ENCODE measurements at regions of chr5 and their contacts with region 1.

Region 1: DNA sequence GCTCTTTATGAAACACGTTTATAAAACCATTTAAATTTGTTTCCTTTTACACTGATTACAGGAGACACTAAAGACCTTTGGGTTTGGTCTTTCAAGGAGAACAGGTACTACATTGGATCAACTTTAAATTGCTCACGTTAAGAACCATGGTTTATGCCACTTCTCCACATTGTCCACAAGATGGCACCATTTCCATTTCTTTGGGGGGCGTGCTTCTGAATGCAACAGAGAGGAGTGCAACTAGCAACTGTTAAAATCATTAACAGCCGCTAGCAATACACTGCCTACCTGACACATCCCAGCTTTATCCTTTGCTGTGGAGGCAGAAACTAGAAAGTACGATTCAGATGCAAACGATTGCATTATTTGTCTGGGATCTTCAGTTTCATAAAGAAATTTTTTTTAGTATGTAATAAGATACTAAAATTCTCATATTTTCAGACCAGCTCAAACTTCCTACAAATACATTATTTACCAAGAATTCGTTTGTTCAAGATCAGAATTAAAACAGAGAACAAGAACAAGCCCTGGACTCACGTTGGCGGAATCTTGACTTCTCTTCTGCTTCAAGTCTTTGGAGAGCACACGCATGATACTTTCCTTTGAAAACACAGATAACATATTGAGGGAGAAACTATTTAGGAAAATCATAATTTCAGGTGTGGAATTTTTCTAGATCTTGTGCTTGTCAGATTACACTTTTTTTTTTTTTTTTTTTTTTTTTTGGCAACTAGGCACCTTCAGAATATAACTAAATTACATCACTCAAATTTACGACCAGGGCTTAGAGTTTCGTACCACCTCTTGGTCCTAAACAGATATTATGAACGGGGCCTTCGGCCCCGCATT is 702 bp downstream of the CDC20B start:
- DNase-seq: peak; percentile 78
- ATAC-seq: peak; percentile 41
- H3K4me3 ChIP-seq: peak overlapping the region; percentile 74
- H3K27ac ChIP-seq: no peak overlapping the region
- H3K4me1 ChIP-seq: peaks cover 17% of the 10 kb centered on the region
- H3K27me3 ChIP-seq: no peaks in the 10 kb centered on the region
- CTCF ChIP-seq: peak; percentile 80

Region 2: DNA sequence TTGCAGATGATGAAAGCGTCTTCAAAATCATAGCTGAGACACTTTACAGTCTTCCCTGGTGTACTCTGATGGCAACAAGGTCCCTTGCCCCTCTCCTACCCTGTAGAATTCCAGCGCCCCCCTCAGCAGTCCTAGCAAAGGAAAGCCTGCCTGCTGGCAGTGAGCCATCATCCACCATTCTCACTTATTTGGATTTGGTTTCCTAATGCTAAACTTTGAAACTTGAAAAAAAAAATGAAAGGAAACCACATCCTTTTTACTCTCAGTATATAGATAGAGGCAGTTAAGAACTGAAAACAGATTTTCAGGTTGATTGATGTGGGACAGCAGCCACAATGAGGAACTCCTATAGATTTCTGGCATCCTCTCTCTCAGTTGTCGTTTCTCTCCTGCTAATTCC is 69.9 kb before region 1 on chr5 and contains the start of gene GZMA:
- CTCF ChIA-PET with region 1: no interaction called
- POLR2A ChIA-PET with region 1: no interaction called
- intact Hi-C with region 1: no loop called
- DNase-seq: no peak
- ATAC-seq: no peak
- H3K4me3 ChIP-seq: no peak within 1 kb of the TSS
- H3K27ac ChIP-seq: no peak within 1 kb of the TSS
- H3K4me1 ChIP-seq: no peaks in the 10 kb centered on the region
- H3K27me3 ChIP-seq: no peaks in the 10 kb centered on the region
- CTCF ChIP-seq: no peak
- total RNA-seq, gene GZMA: not detected in 2 replicates

Region 3: GRCh38 chr5:55232985-55233928 is 61.0 kb after region 1 on chr5 and contains the start of gene CCNO:
- CTCF ChIA-PET with region 1: interaction called, 4 read pairs
- POLR2A ChIA-PET with region 1: no interaction called
- intact Hi-C with region 1: loop called (anchors 2 kb)
- DNase-seq: peak; percentile 84
- ATAC-seq: peak; percentile 83
- H3K4me3 ChIP-seq: peak within 1 kb of the TSS; percentile 83
- H3K27ac ChIP-seq: peak within 1 kb of the TSS; percentile 21
- H3K4me1 ChIP-seq: peaks cover 12% of the 10 kb centered on the region; the same call in 1 of the 2 replicates
- H3K27me3 ChIP-seq: no peaks in the 10 kb centered on the region
- CTCF ChIP-seq: no peak
- total RNA-seq, gene CCNO: 3.4 and 5.3 TPM in 2 replicates